CD14-positive monocyte (primary cell): ENCODE measurements at regions of chr5 and their contacts with region 1.

Region 1: GRCh38 chr5:135364421-135365262 is 34.4 kb downstream of the MACROH2A1 start:
- DNase-seq: no peak
- H3K4me3 ChIP-seq: no peak overlapping the region
- H3K4me3 Mint-ChIP-seq: no peak overlapping the region
- H3K27ac ChIP-seq: peak overlapping the region in 1 of 2 donors; percentile 69
- H3K27ac Mint-ChIP-seq: peak overlapping the region in 4 of 7 donors; percentile 12 to 67 (median 50)
- H3K4me1 ChIP-seq: no peaks in the 10 kb centered on the region
- H3K4me1 Mint-ChIP-seq: peaks cover 34% of the 10 kb centered on the region
- H3K27me3 ChIP-seq: no peaks in the 10 kb centered on the region
- H3K27me3 Mint-ChIP-seq: no peaks in the 10 kb centered on the region
- CTCF ChIP-seq: no peak

Region 2: DNA sequence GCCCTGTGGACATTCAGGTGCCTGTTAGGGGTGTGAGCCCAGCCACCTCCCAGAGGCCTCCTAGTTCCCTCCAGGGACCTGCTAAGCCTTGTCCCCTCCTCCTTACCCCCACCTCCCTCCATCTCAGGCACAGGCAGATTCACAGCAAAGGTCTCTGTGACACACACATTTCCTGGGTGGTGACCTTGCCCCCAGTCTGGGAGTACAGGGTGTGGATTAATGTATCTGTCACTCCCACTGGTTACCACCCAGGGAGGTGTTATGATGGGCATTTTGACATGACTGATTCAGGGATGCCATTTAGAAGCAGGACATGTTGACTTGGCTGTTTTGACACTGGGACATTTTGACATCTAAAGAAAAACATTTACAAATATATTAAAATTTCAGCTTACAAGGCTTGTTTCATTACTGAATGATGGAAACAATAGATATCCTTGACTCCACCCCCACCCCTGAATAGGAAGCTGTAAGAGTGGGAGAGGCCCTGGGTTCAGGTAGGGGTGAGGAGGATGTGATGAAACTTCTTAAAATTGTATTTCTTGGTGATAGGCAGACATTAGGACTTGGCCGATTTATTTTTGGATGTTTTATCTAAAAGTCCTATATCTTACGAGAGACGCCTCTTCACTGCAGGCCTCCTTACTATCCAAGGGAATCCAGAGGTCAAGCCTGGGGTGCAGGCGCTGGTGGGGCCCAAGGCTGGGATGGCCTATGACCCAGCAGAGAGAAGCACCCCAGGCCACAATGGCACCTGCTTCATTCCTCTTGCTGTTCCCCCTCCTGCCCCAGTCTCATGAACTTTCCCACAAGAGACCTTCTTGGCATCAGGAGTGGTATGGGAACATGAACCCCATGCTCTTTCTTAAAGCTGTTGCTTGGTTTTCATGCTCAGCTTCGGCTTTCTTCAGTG is 67.5 kb before region 1 on chr5:
- intact Hi-C with region 1: no loop called
- DNase-seq: no peak
- H3K4me3 ChIP-seq: no peak overlapping the region
- H3K4me3 Mint-ChIP-seq: no peak overlapping the region
- H3K27ac ChIP-seq: no peak overlapping the region
- H3K27ac Mint-ChIP-seq: peak overlapping the region in 1 of 7 donors; percentile 62
- H3K4me1 ChIP-seq: no peaks in the 10 kb centered on the region
- H3K4me1 Mint-ChIP-seq: peaks cover 6% of the 10 kb centered on the region
- H3K27me3 ChIP-seq: no peaks in the 10 kb centered on the region
- H3K27me3 Mint-ChIP-seq: peaks cover 0 to 3% (median 2%) of the 10 kb centered on the region in 3 donors
- CTCF ChIP-seq: no peak

Region 3: GRCh38 chr5:135543485-135544304 is 179.1 kb after region 1 on chr5:
- intact Hi-C with region 1: loop called in 1 of 2 experiments (anchors 10 kb)
- DNase-seq: peak in 2 of 3 donors; percentile 6 to 17
- H3K4me3 ChIP-seq: peak overlapping the region; percentile 20 to 75 (median 43)
- H3K4me3 Mint-ChIP-seq: peak overlapping the region; percentile 86 to 91
- H3K27ac ChIP-seq: no peak overlapping the region
- H3K27ac Mint-ChIP-seq: no peak overlapping the region
- H3K4me1 ChIP-seq: peaks cover 13 to 19% of the 10 kb centered on the region in 2 donors
- H3K4me1 Mint-ChIP-seq: peaks cover 23% of the 10 kb centered on the region
- H3K27me3 ChIP-seq: peaks cover 90 to 100% of the 10 kb centered on the region in 2 donors
- H3K27me3 Mint-ChIP-seq: peaks cover 96 to 99% (median 96%) of the 10 kb centered on the region in 3 donors
- CTCF ChIP-seq: no peak

Region 4: DNA sequence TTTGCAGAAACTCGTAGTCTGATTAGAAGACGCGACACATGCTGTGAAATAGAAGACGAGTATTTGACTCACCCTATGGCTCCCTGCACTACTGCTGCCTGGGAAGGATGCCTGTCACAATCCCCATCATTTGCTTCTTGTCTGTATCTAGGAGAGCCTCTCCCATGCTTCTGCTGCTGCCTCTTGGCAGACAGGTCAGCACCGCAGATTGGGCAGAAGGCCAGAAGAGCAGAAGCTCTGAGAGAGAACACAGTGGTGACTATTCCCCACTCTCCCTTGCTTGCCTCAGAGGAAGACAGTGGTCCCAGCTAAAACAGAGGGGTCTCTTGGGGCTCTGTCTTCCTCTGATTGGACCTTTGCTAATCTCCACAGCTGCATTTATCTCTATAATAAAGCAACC is 912.3 kb after region 1 on chr5:
- intact Hi-C with region 1: no loop called
- DNase-seq: no peak
- H3K4me3 ChIP-seq: no peak overlapping the region
- H3K4me3 Mint-ChIP-seq: no peak overlapping the region
- H3K27ac ChIP-seq: no peak overlapping the region
- H3K27ac Mint-ChIP-seq: no peak overlapping the region
- H3K4me1 ChIP-seq: no peaks in the 10 kb centered on the region
- H3K4me1 Mint-ChIP-seq: no peaks in the 10 kb centered on the region
- H3K27me3 ChIP-seq: no peaks in the 10 kb centered on the region
- H3K27me3 Mint-ChIP-seq: peaks cover 2 to 6% (median 6%) of the 10 kb centered on the region in 3 donors
- CTCF ChIP-seq: no peak